ENCODE measurements at regions of chr3 and their contacts with region 1.

Region 1: GRCh38 chr3:160413613-160414248 is 14.3 kb downstream of the SMC4 start:
- DNase-seq: peak in 4 of 6 donors; percentile 48 to 72 (median 50)
- ATAC-seq: peak; percentile 70 to 95 (median 92)
- H3K4me3 ChIP-seq: no peak overlapping the region
- H3K27ac ChIP-seq: no peak overlapping the region
- H3K4me1 ChIP-seq: no peaks in the 10 kb centered on the region
- H3K27me3 ChIP-seq: no peaks in the 10 kb centered on the region
- CTCF ChIP-seq: peak; percentile 56 to 84 (median 72)

Region 2: DNA sequence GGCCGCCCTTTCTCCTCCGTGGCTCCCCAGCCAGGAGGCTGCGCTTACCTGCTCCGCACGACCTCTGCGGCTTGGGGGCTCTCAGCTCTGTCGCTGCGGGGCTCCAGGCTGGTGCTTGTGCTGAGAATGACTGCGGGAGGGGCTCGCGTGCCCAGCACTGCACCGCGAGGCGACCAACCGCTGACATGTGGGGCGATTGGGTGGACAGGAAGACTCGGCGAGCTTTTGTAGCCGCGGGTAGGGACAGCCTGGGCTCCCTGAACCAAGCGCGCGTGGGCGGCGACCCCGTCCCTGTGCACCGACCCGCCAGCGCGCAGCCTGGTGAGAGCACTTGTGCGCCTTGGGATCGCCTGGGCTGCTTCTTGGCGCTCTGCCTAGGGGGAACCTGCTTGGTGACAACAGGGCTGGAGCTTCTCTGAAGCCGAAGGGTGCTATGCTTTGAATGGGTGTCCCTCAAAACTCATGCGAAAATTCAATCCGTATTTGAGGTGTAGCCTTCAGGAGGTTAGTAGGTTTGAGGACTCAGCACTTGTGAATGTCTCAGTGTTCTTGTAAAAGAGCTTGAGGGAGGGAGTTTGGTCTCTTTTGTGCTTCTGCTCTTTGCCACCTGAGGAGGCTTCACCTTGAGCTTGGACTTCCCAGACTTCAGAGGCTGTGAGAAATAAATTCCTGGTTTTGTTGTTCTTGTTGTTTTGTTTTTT is 374.7 kb before region 1 on chr3:
- intact Hi-C with region 1: loop called in 1 of 3 experiments (anchors 10 kb)
- DNase-seq: peak; percentile 31 to 78 (median 53)
- ATAC-seq: peak; percentile 43 to 70 (median 67)
- H3K4me3 ChIP-seq: peak overlapping the region in 2 of 4 donors; percentile 13 to 44
- H3K27ac ChIP-seq: no peak overlapping the region
- H3K4me1 ChIP-seq: peaks cover 0 to 4% (median 0%) of the 10 kb centered on the region in 3 donors
- H3K27me3 ChIP-seq: no peaks in the 10 kb centered on the region
- CTCF ChIP-seq: no peak

Region 3: DNA sequence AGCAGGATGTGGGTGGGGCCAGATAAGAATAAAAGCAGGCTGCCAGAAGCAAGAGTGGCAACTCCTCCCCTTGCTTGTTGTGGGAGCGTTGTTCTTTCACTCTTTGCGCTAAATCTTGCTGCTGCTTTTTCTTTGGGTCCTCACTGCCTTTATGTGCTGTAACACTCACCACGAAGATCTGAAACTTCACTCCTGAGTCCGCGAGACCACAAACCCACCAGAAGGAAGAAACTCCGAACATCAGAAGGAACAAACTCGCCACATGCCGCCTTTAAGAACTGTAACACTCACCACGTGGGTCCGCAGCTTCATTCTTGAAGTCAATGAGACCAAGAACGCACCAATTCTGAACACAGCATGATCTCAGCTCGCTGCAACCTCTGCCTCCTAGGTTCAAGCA is 352.2 kb before region 1 on chr3:
- intact Hi-C with region 1: no loop called
- DNase-seq: no peak
- ATAC-seq: no peak
- H3K4me3 ChIP-seq: no peak overlapping the region
- H3K27ac ChIP-seq: no peak overlapping the region
- H3K4me1 ChIP-seq: no peaks in the 10 kb centered on the region
- H3K27me3 ChIP-seq: no peaks in the 10 kb centered on the region
- CTCF ChIP-seq: no peak

Region 4: DNA sequence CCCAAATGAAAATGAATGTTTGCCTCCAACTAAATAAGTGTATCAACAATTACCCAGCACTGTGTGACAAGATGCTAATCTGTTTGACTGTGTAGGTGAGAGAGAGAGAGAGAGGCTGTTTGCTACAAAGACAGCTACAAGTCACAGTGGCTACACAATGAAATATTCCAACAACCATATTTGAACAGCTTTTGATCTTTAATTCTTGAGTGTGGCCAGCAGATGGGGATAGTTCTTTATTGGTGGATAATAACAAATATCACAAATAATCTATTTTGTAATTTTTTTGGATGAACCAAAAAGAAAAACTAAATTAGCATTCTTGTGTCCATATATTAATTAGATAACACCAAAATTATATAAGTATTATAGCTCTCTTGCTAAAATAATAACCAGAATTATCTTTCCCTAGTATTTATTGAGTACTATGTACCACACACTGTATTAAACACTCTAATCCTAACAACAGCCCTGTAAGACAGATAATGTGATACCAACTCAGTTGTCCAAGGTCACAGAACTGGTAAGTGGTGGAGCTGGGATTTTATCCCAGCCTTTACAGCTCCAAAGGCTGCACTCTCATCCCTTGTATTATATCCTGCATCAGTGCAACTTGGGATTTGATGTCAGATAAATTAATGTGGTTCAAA is 250.4 kb before region 1 on chr3:
- intact Hi-C with region 1: loop called in 2 of 3 experiments (anchors 5 to 10 kb)
- DNase-seq: no peak
- ATAC-seq: peak in 3 of 4 donors; percentile 48 to 70 (median 52)
- H3K4me3 ChIP-seq: no peak overlapping the region
- H3K27ac ChIP-seq: no peak overlapping the region
- H3K4me1 ChIP-seq: no peaks in the 10 kb centered on the region
- H3K27me3 ChIP-seq: no peaks in the 10 kb centered on the region
- CTCF ChIP-seq: peak in 2 of 4 donors; percentile 24 to 28